Activated CD8-positive, alpha-beta memory T cell treated with anti-CD3 and anti-CD28 coated beads, Interleukin-2, amount 10 ng/mL, durations not matched to agents 7 days and 5 days (primary cell): ENCODE measurements at regions of chr20 and their contacts with region 1.

Region 1: DNA sequence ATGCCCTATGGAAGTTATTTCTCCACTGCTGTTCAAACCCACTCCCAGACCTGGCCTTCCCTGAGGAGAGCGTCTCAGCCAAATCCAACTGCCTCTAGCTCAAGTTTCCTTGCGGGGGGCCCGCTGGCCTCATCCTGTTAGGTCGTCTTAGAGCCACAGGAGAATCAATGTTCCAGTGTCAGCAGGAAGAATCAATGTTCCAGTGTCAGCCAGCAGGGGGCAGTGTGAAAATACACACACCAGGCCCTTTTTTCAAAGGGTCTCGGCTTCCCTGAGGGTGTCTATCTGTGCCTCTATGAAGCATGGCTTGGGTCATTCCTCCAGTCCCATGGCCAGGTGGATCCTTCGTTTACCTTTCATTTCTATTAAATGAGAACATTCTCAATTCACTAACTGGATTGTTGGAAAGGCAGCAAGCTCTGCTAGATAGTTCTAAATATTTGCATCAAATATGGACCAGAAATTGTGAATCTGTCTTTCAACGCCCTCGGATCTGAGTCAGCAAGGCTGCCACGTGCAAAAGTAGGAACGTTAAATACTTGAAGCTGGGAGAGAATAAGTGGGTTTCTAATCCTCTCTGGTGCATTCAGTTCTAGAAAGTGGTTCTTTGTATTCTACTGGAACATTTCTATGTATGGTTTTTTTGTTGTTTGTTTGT is 19.2 kb downstream of the PRND start:
- DNase-seq: peak; percentile 76
- ATAC-seq: peak; percentile 49
- H3K4me3 Mint-ChIP-seq: no peak overlapping the region
- H3K27ac Mint-ChIP-seq: no peak overlapping the region
- H3K4me1 Mint-ChIP-seq: no peaks in the 10 kb centered on the region
- H3K27me3 Mint-ChIP-seq: peaks cover 16% of the 10 kb centered on the region

Region 2: DNA sequence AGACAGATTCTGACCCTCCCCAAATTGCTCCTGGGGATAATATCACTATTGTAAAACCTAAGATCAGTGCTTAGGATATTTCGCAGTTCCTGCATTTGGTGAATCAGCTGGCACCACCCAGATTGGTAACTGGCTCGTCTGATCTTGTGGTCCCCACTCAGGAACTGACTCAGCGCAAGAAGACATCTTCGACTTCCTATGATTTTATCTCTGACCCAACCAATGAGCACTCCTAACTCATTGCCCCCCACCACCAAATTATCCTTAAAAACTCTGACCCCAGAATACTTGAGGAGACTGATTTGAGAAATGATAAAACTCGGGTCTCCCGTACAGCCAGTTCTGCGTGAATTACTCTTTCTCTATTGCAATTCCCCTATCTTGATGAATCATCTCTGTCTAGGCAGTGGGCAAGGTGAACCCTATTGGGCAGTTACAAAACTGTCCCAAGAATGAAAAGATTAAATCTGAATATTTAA is 74.9 kb before region 1 on chr20:
- CTCF ChIA-PET with region 1: no interaction called
- DNase-seq: peak; percentile 87
- ATAC-seq: peak; percentile 94
- H3K4me3 Mint-ChIP-seq: peak overlapping the region; percentile 53
- H3K27ac Mint-ChIP-seq: peak overlapping the region; percentile 92
- H3K4me1 Mint-ChIP-seq: peaks cover 44% of the 10 kb centered on the region
- H3K27me3 Mint-ChIP-seq: no peaks in the 10 kb centered on the region

Region 3: DNA sequence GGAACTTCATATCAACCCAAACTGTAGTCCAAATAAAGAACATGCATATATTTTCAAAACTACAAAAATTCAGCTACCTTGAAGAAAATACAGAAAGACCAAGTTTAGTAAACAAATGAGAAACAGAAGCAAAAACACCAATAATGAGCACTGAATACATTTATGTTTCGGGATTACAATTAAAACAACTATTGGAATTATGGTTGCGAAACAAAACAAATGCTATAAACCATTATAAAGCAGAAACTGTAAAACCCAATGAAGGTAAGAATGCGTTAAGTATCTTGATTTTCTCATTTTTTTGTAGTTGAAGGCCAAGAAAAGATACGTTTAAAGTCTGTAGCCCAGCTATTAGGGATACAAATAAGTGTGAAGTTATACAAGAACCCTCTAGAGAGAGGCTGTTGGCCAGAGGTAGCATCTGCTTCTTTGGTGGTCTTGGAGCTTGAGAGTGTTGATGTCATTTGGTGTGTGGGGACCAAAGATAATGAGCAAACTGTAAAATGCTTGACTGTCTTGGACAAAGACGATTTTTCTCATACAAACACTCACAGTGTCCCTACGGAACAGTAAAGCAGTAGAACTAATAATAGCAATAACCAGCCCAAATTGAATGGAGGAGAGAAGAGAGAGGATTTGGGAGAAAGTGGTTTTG is 92.3 kb after region 1 on chr20:
- CTCF ChIA-PET with region 1: no interaction called
- DNase-seq: no peak
- ATAC-seq: no peak
- H3K4me3 Mint-ChIP-seq: no peak overlapping the region
- H3K27ac Mint-ChIP-seq: no peak overlapping the region
- H3K4me1 Mint-ChIP-seq: peaks cover 3% of the 10 kb centered on the region
- H3K27me3 Mint-ChIP-seq: peaks cover 5% of the 10 kb centered on the region

Region 4: DNA sequence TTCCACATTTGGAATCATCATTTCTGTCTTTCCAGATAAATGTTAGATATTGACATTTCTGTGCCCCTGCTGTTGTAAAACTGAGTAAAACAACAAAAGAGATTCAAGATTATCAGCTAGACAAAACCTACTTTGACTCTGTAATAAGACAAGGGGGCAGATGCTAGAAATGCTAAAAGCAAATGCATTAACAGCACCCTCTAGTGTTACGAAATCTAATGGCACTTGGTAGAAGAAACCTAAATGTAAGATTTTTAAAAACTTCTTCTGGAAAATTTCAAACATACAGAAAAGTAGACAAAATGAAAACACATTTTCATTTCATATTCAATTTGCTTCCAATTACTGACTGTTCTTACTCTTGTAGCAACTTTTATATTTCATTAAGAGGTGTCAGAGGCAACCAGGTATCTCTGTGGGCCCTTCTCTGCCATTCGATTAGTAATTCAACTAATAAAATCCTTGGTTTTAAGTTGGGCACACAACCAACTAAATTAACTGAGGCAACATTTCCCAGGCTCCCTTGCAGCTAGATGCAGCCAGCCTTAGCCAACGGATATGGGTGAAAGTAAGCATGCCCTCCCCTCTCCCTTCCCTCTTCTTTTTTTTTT is 215.4 kb after region 1 on chr20:
- CTCF ChIA-PET with region 1: interaction called, 20 read pairs
- DNase-seq: no peak
- ATAC-seq: peak; percentile 81
- H3K4me3 Mint-ChIP-seq: no peak overlapping the region
- H3K27ac Mint-ChIP-seq: no peak overlapping the region
- H3K4me1 Mint-ChIP-seq: peaks cover 8% of the 10 kb centered on the region
- H3K27me3 Mint-ChIP-seq: no peaks in the 10 kb centered on the region